GM12878 (cell line): ENCODE measurements at regions of chrX and their contacts with region 1.

Region 1: GRCh38 chrX:21985332-21985777 is 44.8 kb downstream of the SMS start:
- DNase-seq: peak; percentile 67
- ATAC-seq: peak; percentile 74
- H3K4me3 ChIP-seq: no peak overlapping the region
- H3K27ac ChIP-seq: no peak overlapping the region
- H3K4me1 ChIP-seq: peaks cover 4% of the 10 kb centered on the region; the same call in 1 of the 2 replicates
- H3K27me3 ChIP-seq: no peaks in the 10 kb centered on the region
- CTCF ChIP-seq: peak; percentile 86 to 99 (median 97); a peak in 5 of 6 replicates
- EP300 ChIP-seq: no peak
- POLR2A ChIP-seq: no peak
- RAD21 ChIP-seq: peak; percentile 95

Region 2: GRCh38 chrX:22041907-22042530 is 56.7 kb after region 1 on chrX:
- CTCF ChIA-PET with region 1: interaction called, 7 read pairs
- POLR2A ChIA-PET with region 1: interaction called, 4 read pairs
- RAD21 ChIA-PET with region 1: interaction called, 51 read pairs
- SMC1A ChIA-PET with region 1: interaction called, 69 read pairs
- in situ Hi-C with region 1: no loop called
- intact Hi-C with region 1: no loop called
- DNase-seq: no peak
- ATAC-seq: peak; percentile 13
- H3K4me3 ChIP-seq: no peak overlapping the region
- H3K27ac ChIP-seq: no peak overlapping the region
- H3K4me1 ChIP-seq: no peaks in the 10 kb centered on the region
- H3K27me3 ChIP-seq: no peaks in the 10 kb centered on the region
- CTCF ChIP-seq: no peak
- EP300 ChIP-seq: no peak
- POLR2A ChIP-seq: no peak
- RAD21 ChIP-seq: no peak

Region 3: DNA sequence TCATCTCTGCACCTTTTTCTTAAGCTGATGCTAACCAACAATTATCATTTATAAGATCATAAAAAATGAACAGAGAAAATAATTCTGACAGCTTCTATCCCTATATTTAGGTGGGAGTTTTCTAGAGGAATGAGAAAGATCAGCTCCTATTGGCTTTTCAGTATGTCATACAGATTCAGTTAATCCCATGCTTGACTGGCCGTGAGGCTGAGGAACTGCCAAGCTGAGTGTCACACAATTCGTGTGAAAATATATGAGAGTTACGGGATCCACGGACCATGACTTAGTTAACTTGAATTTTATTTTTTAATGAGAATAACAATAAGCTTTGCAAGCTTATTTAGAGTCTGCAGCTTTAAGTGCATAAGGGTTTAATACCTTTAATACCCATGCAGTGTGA is 84.2 kb after region 1 on chrX:
- CTCF ChIA-PET with region 1: interaction called, 13 read pairs
- POLR2A ChIA-PET with region 1: interaction called, 4 read pairs
- RAD21 ChIA-PET with region 1: interaction called, 82 read pairs
- SMC1A ChIA-PET with region 1: interaction called, 168 read pairs
- in situ Hi-C with region 1: no loop called
- intact Hi-C with region 1: no loop called
- DNase-seq: no peak
- ATAC-seq: peak; percentile 21; the same call in 1 of the 3 replicates
- H3K4me3 ChIP-seq: no peak overlapping the region
- H3K27ac ChIP-seq: no peak overlapping the region
- H3K4me1 ChIP-seq: no peaks in the 10 kb centered on the region
- H3K27me3 ChIP-seq: no peaks in the 10 kb centered on the region
- CTCF ChIP-seq: no peak
- EP300 ChIP-seq: no peak
- POLR2A ChIP-seq: no peak
- RAD21 ChIP-seq: no peak

Region 4: DNA sequence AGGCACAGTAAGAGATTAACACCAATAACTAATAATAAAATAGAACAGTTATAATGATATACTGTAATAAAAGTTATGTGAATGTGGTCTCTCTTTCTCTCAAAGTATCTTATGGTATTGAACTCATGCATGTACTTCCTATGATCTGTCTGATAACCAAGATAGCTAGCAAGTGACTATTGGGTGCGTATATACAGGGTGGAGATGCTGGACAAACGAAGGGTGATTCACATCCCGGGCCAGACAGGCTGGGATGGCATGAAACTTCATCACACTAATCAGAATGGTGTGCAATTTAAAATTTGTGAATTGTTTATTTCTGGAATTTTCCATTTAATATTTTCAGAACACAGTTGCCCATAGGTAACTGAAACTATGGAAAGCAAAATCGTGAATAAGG is 143.6 kb after region 1 on chrX:
- CTCF ChIA-PET with region 1: interaction called, 102 read pairs
- POLR2A ChIA-PET with region 1: interaction called, 7 read pairs
- RAD21 ChIA-PET with region 1: interaction called, 75 read pairs
- SMC1A ChIA-PET with region 1: interaction called, 121 read pairs
- in situ Hi-C with region 1: no loop called
- intact Hi-C with region 1: no loop called
- DNase-seq: no peak
- ATAC-seq: no peak
- H3K4me3 ChIP-seq: no peak overlapping the region
- H3K27ac ChIP-seq: no peak overlapping the region
- H3K4me1 ChIP-seq: no peaks in the 10 kb centered on the region
- H3K27me3 ChIP-seq: no peaks in the 10 kb centered on the region
- CTCF ChIP-seq: no peak
- EP300 ChIP-seq: no peak
- POLR2A ChIP-seq: no peak
- RAD21 ChIP-seq: no peak

Region 5: DNA sequence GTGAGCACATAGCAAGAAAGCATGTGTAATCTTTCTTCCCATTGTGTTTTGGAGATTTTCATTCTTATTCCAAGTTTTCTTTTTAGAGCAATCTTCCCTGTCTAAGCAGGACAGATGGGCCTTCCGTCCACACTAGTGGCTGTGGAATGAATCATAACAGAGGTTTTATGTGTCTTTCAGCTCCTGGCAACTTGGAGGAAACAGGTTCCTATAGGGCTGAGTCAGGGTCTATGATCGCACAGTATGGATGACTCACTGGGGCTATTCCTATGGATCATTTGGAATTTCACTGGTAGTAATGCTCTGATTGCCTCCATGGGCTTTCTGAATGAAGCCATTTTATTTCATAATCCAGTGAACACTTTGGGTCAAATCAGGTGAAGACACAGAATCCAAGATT is 235.6 kb after region 1 on chrX:
- CTCF ChIA-PET with region 1: interaction called, 11 read pairs
- POLR2A ChIA-PET with region 1: no interaction called
- RAD21 ChIA-PET with region 1: interaction called, 6 read pairs
- SMC1A ChIA-PET with region 1: interaction called, 7 read pairs
- in situ Hi-C with region 1: no loop called
- intact Hi-C with region 1: no loop called
- DNase-seq: no peak
- ATAC-seq: no peak
- H3K4me3 ChIP-seq: no peak overlapping the region
- H3K27ac ChIP-seq: no peak overlapping the region
- H3K4me1 ChIP-seq: no peaks in the 10 kb centered on the region
- H3K27me3 ChIP-seq: no peaks in the 10 kb centered on the region
- CTCF ChIP-seq: no peak
- EP300 ChIP-seq: no peak
- POLR2A ChIP-seq: no peak
- RAD21 ChIP-seq: no peak

Region 6: DNA sequence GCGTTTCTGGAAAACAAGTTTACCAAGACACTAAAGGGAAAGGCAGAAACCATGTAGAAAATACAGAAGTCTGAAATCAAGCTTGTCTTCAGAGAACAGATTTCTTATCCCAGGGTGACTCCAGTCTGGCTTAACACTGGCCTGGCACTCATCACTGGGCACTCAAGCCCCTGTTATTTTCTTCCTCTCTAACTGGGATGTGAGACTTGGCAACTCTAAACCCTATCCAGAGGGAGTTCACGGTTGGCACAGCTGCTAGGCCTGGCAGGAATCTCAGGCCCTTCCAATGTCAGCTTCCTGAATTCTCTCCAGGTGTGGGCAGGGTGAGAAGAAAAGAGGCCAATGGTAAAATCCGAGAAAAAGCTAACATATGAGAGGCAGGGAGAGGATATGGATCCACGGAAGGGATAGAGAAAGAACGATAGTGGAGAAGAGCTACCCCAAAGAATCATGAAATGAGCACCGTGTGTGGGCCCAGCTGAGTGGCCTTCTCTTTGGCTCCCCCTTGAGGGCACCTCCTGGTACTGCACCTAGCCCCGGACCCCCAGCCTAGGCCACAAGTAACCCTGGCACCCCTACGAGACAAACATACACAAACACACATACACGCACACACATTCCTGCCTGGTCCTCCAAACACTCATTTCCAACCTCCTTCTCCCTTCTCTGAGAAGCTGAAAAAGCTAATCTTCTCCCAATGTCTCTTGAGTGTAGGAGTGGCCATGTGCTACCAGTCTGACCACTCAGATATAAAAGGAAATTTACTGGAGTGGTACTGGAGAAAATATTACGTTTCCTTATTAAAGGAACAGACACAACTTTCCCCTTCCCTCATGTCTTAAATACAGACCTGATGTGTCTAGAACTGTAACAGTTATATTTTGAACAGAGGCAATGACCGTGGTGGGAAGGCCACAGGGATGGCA is 1332.7 kb after region 1 on chrX:
- CTCF ChIA-PET with region 1: interaction called, 23 read pairs
- POLR2A ChIA-PET with region 1: no interaction called
- RAD21 ChIA-PET with region 1: interaction called, 21 read pairs
- SMC1A ChIA-PET with region 1: interaction called, 13 read pairs
- in situ Hi-C with region 1: no loop called
- intact Hi-C with region 1: no loop called
- DNase-seq: no peak
- ATAC-seq: peak; percentile 99
- H3K4me3 ChIP-seq: no peak overlapping the region
- H3K27ac ChIP-seq: no peak overlapping the region
- H3K4me1 ChIP-seq: no peaks in the 10 kb centered on the region
- H3K27me3 ChIP-seq: no peaks in the 10 kb centered on the region
- CTCF ChIP-seq: peak; percentile 76 to 96 (median 88)
- EP300 ChIP-seq: no peak
- POLR2A ChIP-seq: no peak
- RAD21 ChIP-seq: peak; percentile 60